ENCODE measurements at regions of chr20 and their contacts with region 1.

Region 1: DNA sequence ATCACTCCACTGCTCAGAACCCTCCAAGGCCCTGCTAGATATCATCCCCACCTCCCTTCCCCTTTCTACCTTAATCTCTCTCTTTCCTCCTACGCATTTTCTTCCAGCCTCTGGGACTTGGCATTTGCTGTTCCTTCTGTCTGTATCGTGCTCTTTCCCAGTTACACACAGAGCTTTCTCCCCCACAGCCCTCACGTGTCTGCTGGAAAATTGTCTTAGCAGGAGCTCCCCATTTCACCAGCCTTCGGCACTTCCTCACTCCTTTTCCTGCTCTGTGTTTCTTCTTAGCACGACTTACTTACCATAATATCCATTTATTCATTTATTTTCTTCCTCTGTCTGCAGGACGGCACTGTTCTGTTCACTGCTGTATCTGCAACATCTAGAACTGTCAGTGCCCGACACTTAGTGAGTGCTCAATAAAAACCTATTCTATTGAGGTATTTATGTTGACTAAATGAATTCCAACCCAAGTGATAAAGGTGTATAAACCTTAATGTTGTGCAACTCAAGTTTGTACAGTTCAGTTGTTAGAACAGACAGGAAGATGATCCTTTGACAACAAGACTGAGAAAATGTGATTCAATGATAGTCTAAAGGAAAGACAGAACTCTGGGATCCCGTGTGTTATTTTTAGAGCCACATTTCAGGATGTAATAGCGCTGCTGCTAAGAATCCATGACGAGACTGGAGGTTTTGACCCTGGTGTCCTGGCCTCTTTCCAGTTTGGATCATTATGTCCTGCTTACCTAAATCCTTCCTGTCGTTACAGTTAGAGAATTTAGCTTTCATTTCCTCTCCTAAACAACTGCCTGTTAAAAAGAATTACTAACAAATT is 170.1 kb upstream of the LAMP5 start:
- DNase-seq: no peak
- ATAC-seq: 0 out of 6 replicates have a peak, but pooled peaks of 1 of the 2 experiments have one; percentile 30
- H3K4me3 ChIP-seq: no peak overlapping the region
- H3K27ac ChIP-seq: peak overlapping the region; percentile 9 to 45; a peak in 1 of 6 replicates
- H3K4me1 ChIP-seq: peaks cover 37% of the 10 kb centered on the region
- CTCF ChIP-seq: no peak
- EP300 ChIP-seq: no peak
- POLR2A ChIP-seq: no peak
- RAD21 ChIP-seq: no peak

Region 2: DNA sequence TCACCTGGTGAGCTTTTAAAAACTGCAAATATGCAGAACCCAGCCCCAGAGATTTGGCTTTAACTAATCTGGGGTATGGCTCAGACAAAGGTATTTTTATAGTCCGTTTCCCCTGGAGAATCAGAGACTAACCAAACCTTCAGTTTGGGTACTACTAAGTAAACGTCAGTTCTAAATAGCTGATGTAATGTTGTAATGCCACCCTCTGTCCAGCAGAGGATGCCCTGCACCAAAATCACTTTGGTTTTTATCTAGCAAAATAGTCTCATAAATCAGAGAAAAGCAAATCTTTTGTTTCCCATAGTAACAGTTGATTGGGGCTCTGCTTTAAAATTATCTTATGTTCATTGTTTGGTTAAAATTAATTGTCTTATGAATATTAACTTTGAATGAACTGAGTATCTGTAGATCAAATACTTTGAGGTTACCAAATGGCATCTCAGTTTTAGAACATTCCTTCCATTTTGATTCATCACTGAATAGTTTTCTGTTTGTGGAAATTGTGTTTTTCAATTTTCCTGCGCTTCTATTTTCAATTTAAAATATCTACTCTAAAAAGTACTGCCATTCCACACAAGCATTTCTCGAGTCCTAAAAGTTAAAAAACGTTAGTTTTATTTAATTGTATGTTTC is 553.7 kb before region 1 on chr20:
- CTCF ChIA-PET with region 1: interaction called, 18 read pairs
- POLR2A ChIA-PET with region 1: no interaction called
- DNase-seq: peak; percentile 15 to 63
- ATAC-seq: peak; percentile 69 to 75; a peak in 5 of 6 replicates
- H3K4me3 ChIP-seq: no peak overlapping the region
- H3K27ac ChIP-seq: peak overlapping the region in 1 of 2 experiments; percentile 44; a peak in 1 of 6 replicates
- H3K4me1 ChIP-seq: no peaks in the 10 kb centered on the region
- CTCF ChIP-seq: peak; percentile 99
- EP300 ChIP-seq: no peak
- POLR2A ChIP-seq: no peak
- RAD21 ChIP-seq: peak; percentile 95 to 98

Region 3: GRCh38 chr20:9332783-9333479 is 11.4 kb before region 1 on chr20:
- CTCF ChIA-PET with region 1: interaction called, 12 read pairs
- POLR2A ChIA-PET with region 1: no interaction called
- DNase-seq: no peak
- ATAC-seq: no peak
- H3K4me3 ChIP-seq: no peak overlapping the region
- H3K27ac ChIP-seq: peak overlapping the region; percentile 37 to 55; a peak in 4 of 6 replicates
- H3K4me1 ChIP-seq: peaks cover 51% of the 10 kb centered on the region
- CTCF ChIP-seq: no peak
- EP300 ChIP-seq: no peak
- POLR2A ChIP-seq: no peak
- RAD21 ChIP-seq: no peak